Endothelial cell of umbilical vein (primary cell): ENCODE measurements at regions of chr2 and their contacts with region 1.

Region 1: DNA sequence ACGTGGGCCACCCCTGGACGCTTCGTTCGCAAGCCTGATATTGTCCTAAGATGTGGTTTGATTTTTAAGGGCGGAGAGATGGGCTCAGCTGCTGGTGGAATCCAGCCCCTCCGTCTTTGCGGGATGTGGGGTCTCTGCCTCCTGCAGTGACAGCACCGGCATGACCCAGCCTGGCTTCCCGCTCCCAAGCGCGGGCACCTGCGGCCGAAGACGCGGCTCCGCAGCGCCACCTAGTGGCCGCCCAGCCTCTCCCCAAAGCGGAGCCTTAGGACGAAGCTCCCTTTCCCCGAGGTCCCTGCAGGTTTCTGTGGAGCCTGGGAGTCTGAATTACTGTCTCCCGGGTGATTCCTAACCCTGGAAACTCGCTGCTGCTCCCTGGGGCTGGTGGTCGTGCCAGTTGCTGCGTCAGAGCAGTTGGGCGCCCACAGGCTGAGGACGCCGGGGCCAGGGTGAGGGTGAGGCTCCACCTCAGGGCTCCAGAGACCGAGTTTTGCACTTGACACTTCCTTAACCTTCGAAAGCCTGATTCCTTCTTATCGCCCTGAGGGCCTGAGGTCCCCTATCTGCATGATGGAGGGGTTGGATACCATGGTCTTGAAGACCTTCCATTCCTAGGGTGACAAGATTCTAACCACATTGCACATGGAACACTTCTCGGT is 137.5 kb downstream of the TPO start:
- DNase-seq: peak; percentile 27
- H3K4me3 ChIP-seq: no peak overlapping the region
- H3K27ac ChIP-seq: no peak overlapping the region
- H3K4me1 ChIP-seq: no peaks in the 10 kb centered on the region
- H3K27me3 ChIP-seq: no peaks in the 10 kb centered on the region
- CTCF ChIP-seq: peak; percentile 93 to 99
- POLR2A ChIP-seq: no peak

Region 2: DNA sequence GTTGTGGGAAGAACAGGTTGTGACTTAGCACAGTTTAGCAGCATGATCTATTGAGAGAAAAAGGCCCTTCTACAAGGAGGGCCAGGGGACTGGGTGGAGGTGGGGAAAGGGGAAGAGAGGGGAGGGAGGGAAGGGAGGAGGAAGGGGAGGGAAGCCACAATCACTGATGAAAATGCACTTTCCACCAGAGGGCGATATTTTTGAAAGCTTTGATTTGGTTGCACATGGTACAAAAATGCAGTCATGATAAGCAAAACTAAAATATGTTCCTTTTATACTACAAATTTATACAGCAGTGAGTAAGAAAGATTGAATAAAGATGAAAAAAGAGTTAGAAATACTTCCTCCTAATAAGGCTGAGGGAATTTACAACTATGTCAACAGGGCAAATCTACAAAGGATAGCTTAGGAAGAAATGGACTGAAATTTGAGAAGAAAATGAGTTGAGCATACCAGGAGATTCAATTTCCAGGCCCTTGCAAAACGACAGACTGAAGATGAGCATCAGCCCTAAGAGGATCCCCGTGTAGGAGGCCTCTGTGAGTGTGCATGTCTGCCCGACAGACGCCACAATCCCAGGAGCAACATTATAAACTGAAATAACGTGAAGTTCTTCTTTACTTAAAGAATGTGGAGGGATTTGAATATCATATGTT is 1304.2 kb before region 1 on chr2:
- CTCF ChIA-PET with region 1: interaction called, 9 read pairs
- POLR2A ChIA-PET with region 1: no interaction called
- dilution Hi-C with region 1: no loop called
- intact Hi-C with region 1: loop called (anchors 1 kb)
- DNase-seq: peak; percentile 59
- H3K4me3 ChIP-seq: no peak overlapping the region
- H3K27ac ChIP-seq: no peak overlapping the region
- H3K4me1 ChIP-seq: no peaks in the 10 kb centered on the region
- H3K27me3 ChIP-seq: no peaks in the 10 kb centered on the region
- CTCF ChIP-seq: peak; percentile 32 to 65
- POLR2A ChIP-seq: no peak

Region 3: DNA sequence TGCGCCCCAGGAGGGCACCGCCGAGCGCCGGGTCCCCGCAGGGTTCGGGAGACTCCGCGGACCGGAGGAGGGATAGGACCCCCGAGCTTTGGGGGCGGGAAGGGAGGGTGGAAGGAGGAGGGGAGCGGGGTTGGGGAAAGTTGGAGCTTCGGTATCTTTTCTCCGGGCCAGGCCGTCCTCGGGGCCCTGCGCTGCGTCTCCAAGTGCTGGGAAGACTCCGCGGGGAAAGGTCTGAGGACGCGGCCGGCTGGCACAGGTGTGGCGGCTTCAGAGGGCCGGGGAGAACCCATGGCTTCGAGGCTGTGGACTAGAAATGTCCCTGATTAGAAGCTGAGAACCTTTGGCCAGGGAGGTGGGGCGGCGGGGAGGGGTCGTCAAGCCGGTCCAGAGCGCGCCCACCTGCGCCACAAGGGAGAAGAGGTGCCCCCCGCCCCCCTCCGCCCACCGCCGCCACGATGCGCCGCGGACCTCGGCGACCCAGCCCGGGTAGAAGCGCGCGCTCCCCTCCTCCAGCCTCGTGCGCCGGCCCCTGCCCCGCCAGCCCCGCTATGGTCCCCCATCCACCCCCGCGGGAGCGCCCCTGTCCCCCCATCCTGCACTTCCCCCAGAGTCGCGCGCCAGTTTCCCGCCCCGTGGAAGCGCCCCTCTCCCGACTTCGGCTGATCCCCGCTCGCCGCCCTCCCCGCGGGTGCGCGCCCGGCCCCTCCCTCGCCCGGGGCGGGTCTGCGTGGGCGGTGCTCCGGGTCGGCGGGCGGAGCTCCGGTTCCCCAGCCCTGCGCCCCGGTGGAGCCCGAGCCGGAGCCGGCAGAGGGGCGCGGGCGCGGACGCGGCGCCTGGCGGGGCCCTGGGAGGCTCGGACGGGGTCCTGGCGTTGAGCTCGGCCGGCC is 600.5 kb before region 1 on chr2 and contains the start of gene SNTG2:
- CTCF ChIA-PET with region 1: no interaction called
- POLR2A ChIA-PET with region 1: no interaction called
- dilution Hi-C with region 1: no loop called
- intact Hi-C with region 1: loop called (anchors 10 kb)
- DNase-seq: no peak
- H3K4me3 ChIP-seq: no peak within 1 kb of the TSS
- H3K27ac ChIP-seq: no peak within 1 kb of the TSS
- H3K4me1 ChIP-seq: no peaks in the 10 kb centered on the region
- H3K27me3 ChIP-seq: peaks cover 0 to 3% of the 10 kb centered on the region in 2 experiments
- CTCF ChIP-seq: no peak
- POLR2A ChIP-seq: no peak
- total RNA-seq, gene SNTG2: not detected in 2 replicates

Region 4: GRCh38 chr2:1431886-1432400 is 118.8 kb before region 1 on chr2:
- CTCF ChIA-PET with region 1: no interaction called
- POLR2A ChIA-PET with region 1: no interaction called
- dilution Hi-C with region 1: no loop called
- intact Hi-C with region 1: no loop called
- DNase-seq: no peak
- H3K4me3 ChIP-seq: no peak overlapping the region
- H3K27ac ChIP-seq: no peak overlapping the region
- H3K4me1 ChIP-seq: no peaks in the 10 kb centered on the region
- H3K27me3 ChIP-seq: no peaks in the 10 kb centered on the region
- CTCF ChIP-seq: no peak
- POLR2A ChIP-seq: no peak

Region 5: DNA sequence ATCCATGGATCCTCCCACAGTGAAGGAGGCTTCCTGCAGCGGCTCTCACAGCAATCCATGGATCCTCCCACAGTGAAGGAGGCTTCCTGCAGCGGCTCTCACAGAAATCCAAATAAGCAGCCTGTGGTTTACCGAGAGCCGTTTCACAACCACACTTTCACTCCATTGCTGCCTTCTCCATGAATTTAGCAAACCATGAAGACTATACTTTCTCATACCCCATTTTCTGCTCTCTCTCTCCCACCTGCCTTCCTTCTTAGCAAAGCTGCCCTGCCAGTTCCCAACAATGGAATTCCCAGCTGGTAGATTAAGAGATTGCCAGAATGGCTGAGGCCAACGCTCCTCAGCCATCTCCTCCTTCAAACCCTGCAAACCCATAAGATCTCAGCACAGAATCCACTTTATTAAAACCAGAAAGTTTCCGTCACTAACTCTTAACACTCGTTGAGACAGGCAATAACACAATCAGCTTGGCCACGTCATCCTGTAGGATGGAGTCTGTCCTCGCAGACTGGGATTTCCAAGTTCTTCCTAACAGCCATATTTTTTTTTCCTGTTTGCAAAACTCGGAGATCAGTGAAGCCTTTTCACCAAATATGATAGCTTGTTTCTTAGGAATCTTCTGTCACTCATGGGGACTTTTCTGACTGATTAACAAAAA is 31.3 kb after region 1 on chr2:
- CTCF ChIA-PET with region 1: interaction called, 10 read pairs
- POLR2A ChIA-PET with region 1: no interaction called
- dilution Hi-C with region 1: no loop called
- intact Hi-C with region 1: no loop called
- DNase-seq: no peak
- H3K4me3 ChIP-seq: no peak overlapping the region
- H3K27ac ChIP-seq: no peak overlapping the region
- H3K4me1 ChIP-seq: no peaks in the 10 kb centered on the region
- H3K27me3 ChIP-seq: no peaks in the 10 kb centered on the region
- CTCF ChIP-seq: no peak
- POLR2A ChIP-seq: no peak

Region 6: DNA sequence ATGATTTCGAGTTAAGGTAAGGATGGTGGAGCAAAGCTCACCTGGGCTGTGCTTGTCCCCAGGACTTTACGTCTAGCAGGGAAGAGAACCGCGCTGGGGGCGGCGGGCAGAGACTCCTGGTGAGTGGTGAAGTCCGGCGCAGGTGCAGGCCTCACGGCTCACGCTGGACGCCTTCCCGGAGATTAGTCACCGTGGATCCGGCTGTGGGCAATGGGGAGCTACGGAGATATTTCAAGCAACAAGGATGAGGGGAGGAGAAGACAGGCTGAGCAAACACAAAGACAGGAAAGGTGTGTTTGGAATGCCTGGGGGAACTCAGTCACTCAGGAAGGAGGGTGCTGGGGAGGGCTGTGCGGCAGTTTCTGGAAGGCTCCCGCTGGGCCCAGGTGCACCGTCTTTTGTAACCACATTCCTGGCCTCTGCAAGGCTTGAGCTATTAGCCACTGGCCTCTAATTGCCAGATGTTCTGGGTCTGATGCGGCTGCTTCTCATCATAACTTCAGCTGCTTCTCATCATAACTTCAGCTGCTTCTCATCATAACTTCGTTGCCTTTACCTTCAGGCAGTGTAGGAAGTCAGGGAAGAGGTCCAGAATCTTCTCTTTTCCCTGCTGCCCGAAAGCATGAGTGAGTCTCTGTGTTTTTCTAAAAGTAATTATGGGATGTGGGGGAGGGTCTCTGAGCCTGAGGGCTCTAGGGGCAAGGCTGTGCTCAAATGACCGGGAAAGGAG is 74.6 kb after region 1 on chr2:
- CTCF ChIA-PET with region 1: interaction called, 11 read pairs
- POLR2A ChIA-PET with region 1: no interaction called
- dilution Hi-C with region 1: no loop called
- intact Hi-C with region 1: no loop called
- DNase-seq: peak; percentile 92
- H3K4me3 ChIP-seq: no peak overlapping the region
- H3K27ac ChIP-seq: peak overlapping the region; percentile 79
- H3K4me1 ChIP-seq: peaks cover 23% of the 10 kb centered on the region
- H3K27me3 ChIP-seq: no peaks in the 10 kb centered on the region
- CTCF ChIP-seq: no peak
- POLR2A ChIP-seq: peak; percentile 41

Region 7: GRCh38 chr2:1874101-1874865 is 323.5 kb after region 1 on chr2:
- CTCF ChIA-PET with region 1: no interaction called
- POLR2A ChIA-PET with region 1: no interaction called
- dilution Hi-C with region 1: no loop called
- intact Hi-C with region 1: no loop called
- DNase-seq: no peak
- H3K4me3 ChIP-seq: no peak overlapping the region
- H3K27ac ChIP-seq: no peak overlapping the region
- H3K4me1 ChIP-seq: no peaks in the 10 kb centered on the region
- H3K27me3 ChIP-seq: no peaks in the 10 kb centered on the region
- CTCF ChIP-seq: no peak
- POLR2A ChIP-seq: no peak

Region 8: DNA sequence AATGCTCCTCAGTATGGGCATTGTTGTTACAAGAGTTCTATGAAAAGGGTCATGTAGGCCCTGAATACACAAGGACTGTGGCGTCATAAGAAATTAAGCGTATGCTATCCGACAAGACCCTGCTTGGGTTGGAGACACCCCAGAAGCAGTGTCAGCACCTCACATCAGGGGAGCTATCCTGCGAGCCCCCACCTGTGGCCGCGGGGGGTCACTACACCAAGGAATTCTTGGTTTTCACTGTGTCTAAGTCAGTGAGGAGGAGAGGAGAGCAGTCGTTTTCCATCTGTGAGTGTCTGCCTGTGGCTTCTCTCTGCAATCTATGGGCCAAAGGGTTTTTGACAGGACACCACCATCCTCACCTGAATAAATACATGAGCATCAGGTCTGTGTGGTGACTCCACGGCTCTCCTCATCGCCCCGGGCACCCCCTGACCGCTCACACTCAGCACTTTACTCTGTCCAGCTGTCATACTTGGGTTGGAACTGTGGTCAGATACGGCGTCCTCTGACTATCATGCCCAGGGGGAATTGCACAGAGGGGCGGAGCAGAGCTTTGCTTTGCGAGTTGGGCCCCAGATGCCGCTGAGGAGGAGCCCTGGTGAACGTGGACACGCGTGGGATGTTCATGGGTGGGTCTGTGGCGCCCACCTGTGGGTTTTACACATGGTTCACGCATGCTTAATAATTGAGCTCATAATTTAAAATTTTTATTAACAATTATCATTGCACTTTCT is 544.7 kb after region 1 on chr2:
- CTCF ChIA-PET with region 1: no interaction called
- POLR2A ChIA-PET with region 1: no interaction called
- dilution Hi-C with region 1: no loop called
- intact Hi-C with region 1: no loop called
- DNase-seq: no peak
- H3K4me3 ChIP-seq: no peak overlapping the region
- H3K27ac ChIP-seq: no peak overlapping the region
- H3K4me1 ChIP-seq: no peaks in the 10 kb centered on the region
- H3K27me3 ChIP-seq: no peaks in the 10 kb centered on the region
- CTCF ChIP-seq: no peak
- POLR2A ChIP-seq: no peak